Endothelial cell of umbilical vein (primary cell): ENCODE measurements at regions of chr12 and their contacts with region 1.

Region 1: GRCh38 chr12:1130164-1130563 is 139.1 kb downstream of the ERC1 start:
- DNase-seq: peak; percentile 72
- H3K4me3 ChIP-seq: no peak overlapping the region
- H3K27ac ChIP-seq: no peak overlapping the region
- H3K4me1 ChIP-seq: peaks cover 8% of the 10 kb centered on the region
- H3K27me3 ChIP-seq: no peaks in the 10 kb centered on the region
- CTCF ChIP-seq: no peak
- POLR2A ChIP-seq: no peak

Region 2: DNA sequence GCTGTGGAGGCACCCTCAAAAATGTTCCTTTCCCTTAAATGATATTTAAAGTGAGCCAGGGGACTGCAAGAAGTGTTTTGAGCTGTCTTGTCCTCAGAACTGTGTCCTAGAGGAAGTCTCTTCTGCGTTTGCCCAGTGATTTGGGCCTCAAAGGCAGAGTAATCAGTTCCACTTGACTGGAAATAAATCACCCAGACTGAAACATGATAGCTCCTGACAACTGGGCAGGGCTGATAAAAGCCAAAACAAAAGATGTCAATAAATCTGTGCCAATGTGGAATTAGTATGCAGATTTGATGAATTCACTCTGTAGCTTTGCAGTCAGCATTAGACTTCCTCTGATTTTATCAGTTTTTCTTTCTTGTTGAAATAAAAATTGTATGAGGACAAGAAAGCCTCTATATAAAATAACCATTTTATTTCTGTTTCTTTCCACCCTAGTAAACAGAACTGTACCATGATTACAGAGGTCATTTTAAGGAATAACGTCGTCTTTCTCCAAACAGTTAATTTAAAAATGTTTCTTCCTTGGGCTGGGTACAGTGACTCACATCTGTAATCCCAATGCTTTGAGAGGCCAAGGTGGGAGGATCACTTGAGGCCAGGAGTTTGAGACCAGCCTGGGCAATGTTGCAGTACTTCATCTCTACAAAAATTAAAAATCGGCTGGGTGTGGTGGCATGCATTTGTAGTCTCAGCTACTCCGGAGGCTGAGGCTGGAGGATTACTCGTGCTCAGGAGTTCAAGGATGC is 41.7 kb after region 1 on chr12:
- CTCF ChIA-PET with region 1: interaction called, 7 read pairs
- POLR2A ChIA-PET with region 1: interaction called, 3 read pairs
- dilution Hi-C with region 1: no loop called
- intact Hi-C with region 1: loop called (anchors 5 kb)
- DNase-seq: peak; percentile 94
- H3K4me3 ChIP-seq: no peak overlapping the region
- H3K27ac ChIP-seq: peak overlapping the region; percentile 34
- H3K4me1 ChIP-seq: peaks cover 17% of the 10 kb centered on the region
- H3K27me3 ChIP-seq: no peaks in the 10 kb centered on the region
- CTCF ChIP-seq: no peak
- POLR2A ChIP-seq: peak; percentile 25

Region 3: GRCh38 chr12:1226951-1227350 is 96.8 kb after region 1 on chr12:
- CTCF ChIA-PET with region 1: no interaction called
- POLR2A ChIA-PET with region 1: no interaction called
- dilution Hi-C with region 1: no loop called
- intact Hi-C with region 1: no loop called
- DNase-seq: no peak
- H3K4me3 ChIP-seq: no peak overlapping the region
- H3K27ac ChIP-seq: no peak overlapping the region
- H3K4me1 ChIP-seq: no peaks in the 10 kb centered on the region
- H3K27me3 ChIP-seq: no peaks in the 10 kb centered on the region
- CTCF ChIP-seq: no peak
- POLR2A ChIP-seq: no peak